ENCODE measurements at regions of chr6 and their contacts with region 1.

Region 1: GRCh38 chr6:56292505-56293181 is 45.3 kb upstream of the COL21A1 start:
- DNase-seq: peak; percentile 88
- H3K4me3 ChIP-seq: no peak overlapping the region
- H3K27ac ChIP-seq: no peak overlapping the region
- H3K4me1 ChIP-seq: peaks cover 5% of the 10 kb centered on the region
- H3K27me3 ChIP-seq: no peaks in the 10 kb centered on the region
- CTCF ChIP-seq: peak; percentile 30 to 38
- POLR2A ChIP-seq: no peak

Region 2: GRCh38 chr6:54404791-54405190 is 1887.9 kb before region 1 on chr6:
- CTCF ChIA-PET with region 1: no interaction called
- POLR2A ChIA-PET with region 1: no interaction called
- dilution Hi-C with region 1: no loop called
- intact Hi-C with region 1: no loop called
- DNase-seq: no peak
- H3K4me3 ChIP-seq: no peak overlapping the region
- H3K27ac ChIP-seq: no peak overlapping the region
- H3K4me1 ChIP-seq: no peaks in the 10 kb centered on the region
- H3K27me3 ChIP-seq: no peaks in the 10 kb centered on the region
- CTCF ChIP-seq: no peak
- POLR2A ChIP-seq: no peak

Region 3: DNA sequence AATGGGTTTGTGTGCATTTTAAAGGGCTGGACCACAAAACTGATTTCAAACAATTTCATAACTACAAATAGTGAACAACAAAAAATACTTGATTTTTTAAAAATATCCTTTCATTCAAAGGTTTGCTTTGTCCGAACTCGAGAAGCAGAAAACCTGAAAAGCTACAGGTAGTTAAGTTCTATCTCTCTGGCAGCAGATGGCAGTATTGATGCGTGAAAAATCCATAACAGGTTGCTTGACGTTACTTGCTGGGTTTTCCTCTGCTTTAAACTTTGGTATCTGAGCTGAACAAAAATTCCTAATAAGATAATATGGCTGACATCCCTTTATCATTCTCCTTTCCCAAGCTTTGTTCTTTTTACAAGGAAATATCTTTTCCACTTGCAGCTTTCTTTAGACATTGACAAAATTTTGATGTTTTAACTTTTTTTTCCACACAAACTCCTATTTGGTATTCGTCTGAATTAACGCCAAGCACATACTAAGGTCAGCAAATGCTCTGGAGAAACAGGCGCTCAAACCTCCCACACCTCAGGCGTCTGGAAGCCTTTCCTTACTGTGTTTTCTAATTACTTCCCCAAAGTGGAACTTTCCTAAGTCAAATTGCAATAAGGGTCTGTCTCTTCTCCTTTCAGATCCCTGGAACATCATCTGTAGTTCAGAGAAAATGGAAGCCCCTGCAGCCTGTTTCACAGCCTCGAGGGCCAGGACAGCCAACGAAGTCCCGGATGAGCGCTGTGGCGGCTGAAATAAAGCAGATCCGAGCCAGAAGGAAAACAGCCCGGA is 1015.7 kb before region 1 on chr6:
- CTCF ChIA-PET with region 1: interaction called, 61 read pairs
- POLR2A ChIA-PET with region 1: no interaction called
- dilution Hi-C with region 1: no loop called
- intact Hi-C with region 1: loop called (anchors 1 kb)
- DNase-seq: peak; percentile 64
- H3K4me3 ChIP-seq: no peak overlapping the region
- H3K27ac ChIP-seq: no peak overlapping the region
- H3K4me1 ChIP-seq: no peaks in the 10 kb centered on the region
- H3K27me3 ChIP-seq: peaks cover 0 to 2% of the 10 kb centered on the region in 2 experiments
- CTCF ChIP-seq: peak; percentile 47 to 56
- POLR2A ChIP-seq: no peak

Region 4: GRCh38 chr6:55617272-55617671 is 675.4 kb before region 1 on chr6:
- CTCF ChIA-PET with region 1: interaction called, 15 read pairs
- POLR2A ChIA-PET with region 1: no interaction called
- dilution Hi-C with region 1: no loop called
- intact Hi-C with region 1: loop called (anchors 1 kb)
- DNase-seq: peak; percentile 60
- H3K4me3 ChIP-seq: no peak overlapping the region
- H3K27ac ChIP-seq: no peak overlapping the region
- H3K4me1 ChIP-seq: no peaks in the 10 kb centered on the region
- H3K27me3 ChIP-seq: no peaks in the 10 kb centered on the region
- CTCF ChIP-seq: peak; percentile 54 to 59
- POLR2A ChIP-seq: no peak

Region 5: GRCh38 chr6:55963301-55963700 is 329.3 kb before region 1 on chr6:
- CTCF ChIA-PET with region 1: interaction called, 13 read pairs
- POLR2A ChIA-PET with region 1: no interaction called
- dilution Hi-C with region 1: no loop called
- intact Hi-C with region 1: no loop called
- DNase-seq: no peak
- H3K4me3 ChIP-seq: no peak overlapping the region
- H3K27ac ChIP-seq: no peak overlapping the region
- H3K4me1 ChIP-seq: no peaks in the 10 kb centered on the region
- H3K27me3 ChIP-seq: no peaks in the 10 kb centered on the region
- CTCF ChIP-seq: peak; percentile 29 to 37
- POLR2A ChIP-seq: no peak

Region 6: GRCh38 chr6:56046576-56046975 is 246.1 kb before region 1 on chr6:
- CTCF ChIA-PET with region 1: interaction called, 5 read pairs
- POLR2A ChIA-PET with region 1: no interaction called
- dilution Hi-C with region 1: no loop called
- intact Hi-C with region 1: loop called (anchors 2 kb)
- DNase-seq: peak; percentile 94
- H3K4me3 ChIP-seq: no peak overlapping the region
- H3K27ac ChIP-seq: peak overlapping the region; percentile 63
- H3K4me1 ChIP-seq: peaks cover 39% of the 10 kb centered on the region
- H3K27me3 ChIP-seq: no peaks in the 10 kb centered on the region
- CTCF ChIP-seq: no peak
- POLR2A ChIP-seq: no peak

Region 7: DNA sequence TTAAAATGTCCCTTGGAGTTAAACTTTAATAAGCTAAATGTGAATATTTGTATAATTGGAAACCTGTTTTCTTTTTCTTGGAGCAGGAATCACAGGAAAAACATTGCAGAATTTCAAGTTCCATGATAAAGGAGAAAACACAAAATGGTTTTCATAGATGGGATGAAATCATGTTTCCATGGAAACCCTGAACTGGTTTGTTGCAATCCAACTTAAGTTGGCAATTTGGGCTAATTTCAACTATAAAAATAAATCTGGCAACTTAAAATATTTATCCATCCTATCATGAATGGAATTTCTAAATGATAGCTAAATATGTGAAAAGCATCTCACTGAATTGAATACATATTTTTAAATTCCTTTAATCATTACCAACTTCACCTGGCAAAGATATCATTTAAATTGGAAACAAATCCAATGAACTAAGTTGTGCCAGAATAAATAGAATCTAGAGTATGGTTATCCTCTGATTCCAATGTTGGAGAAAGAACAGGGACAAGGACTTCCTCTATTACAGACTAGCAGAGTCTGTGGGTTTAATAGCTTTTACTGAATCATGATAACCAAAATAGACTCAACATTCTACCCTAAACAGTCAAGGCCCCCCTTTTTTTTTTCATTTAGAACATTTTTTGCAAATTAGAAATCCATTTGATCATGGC is 78.5 kb before region 1 on chr6:
- CTCF ChIA-PET with region 1: no interaction called
- POLR2A ChIA-PET with region 1: no interaction called
- dilution Hi-C with region 1: no loop called
- intact Hi-C with region 1: no loop called
- DNase-seq: no peak
- H3K4me3 ChIP-seq: no peak overlapping the region
- H3K27ac ChIP-seq: no peak overlapping the region
- H3K4me1 ChIP-seq: no peaks in the 10 kb centered on the region
- H3K27me3 ChIP-seq: no peaks in the 10 kb centered on the region
- CTCF ChIP-seq: no peak
- POLR2A ChIP-seq: no peak

Region 8: DNA sequence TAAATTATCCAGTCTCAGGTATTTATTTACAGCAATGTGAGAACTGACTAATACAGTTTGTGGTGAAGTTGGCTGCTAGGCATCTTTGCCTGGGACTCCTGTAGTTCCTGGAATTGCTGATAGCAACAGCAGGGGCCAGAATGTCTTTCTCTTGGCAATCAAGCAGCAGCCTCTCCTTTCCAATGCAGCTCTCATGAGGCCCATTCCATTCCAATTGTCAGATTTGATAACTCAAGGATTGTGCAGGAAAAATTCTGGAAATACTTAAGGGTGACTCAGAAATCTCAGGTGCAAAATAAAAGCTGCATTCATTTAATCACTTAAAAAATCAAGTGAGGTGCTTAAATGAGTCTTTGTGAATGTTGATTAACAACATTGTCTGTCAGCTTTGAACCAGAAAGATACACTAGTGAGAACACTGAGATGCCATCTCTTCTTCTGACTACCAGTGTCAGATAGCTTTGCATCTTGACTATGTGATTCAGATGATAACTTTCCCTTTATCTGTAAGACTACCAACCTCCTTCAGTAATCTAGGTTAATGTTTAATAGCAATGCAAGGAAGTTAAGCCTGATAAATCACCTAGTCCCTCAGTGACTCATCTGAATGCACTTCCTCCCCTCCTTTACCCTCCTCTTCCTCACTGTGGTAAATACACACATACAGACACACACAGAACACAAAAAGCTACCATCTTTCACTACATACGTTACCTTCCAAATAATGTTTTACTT is 13.1 kb before region 1 on chr6:
- CTCF ChIA-PET with region 1: interaction called, 16 read pairs
- POLR2A ChIA-PET with region 1: no interaction called
- dilution Hi-C with region 1: no loop called
- intact Hi-C with region 1: no loop called
- DNase-seq: peak; percentile 17
- H3K4me3 ChIP-seq: no peak overlapping the region
- H3K27ac ChIP-seq: no peak overlapping the region
- H3K4me1 ChIP-seq: no peaks in the 10 kb centered on the region
- H3K27me3 ChIP-seq: no peaks in the 10 kb centered on the region
- CTCF ChIP-seq: no peak
- POLR2A ChIP-seq: no peak

Region 9: DNA sequence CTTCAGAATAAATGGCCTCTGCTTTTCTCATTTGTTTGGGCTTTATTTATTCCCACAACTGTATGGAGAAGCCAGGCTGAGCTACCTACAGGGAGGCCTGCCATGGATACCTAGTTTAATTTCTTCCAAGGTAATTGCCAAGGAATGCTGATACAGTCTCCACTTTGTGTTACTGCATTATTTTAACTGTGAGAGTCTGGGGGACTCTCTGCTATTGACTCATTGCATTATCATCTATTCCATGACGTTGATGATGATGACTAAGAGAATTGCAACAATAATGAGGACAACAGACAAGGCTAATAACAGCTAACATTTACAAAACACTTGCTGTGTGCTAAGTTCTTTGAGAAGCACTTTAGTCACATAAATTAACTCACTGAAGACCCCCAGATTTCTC is 43.1 kb after region 1 on chr6:
- CTCF ChIA-PET with region 1: no interaction called
- POLR2A ChIA-PET with region 1: no interaction called
- dilution Hi-C with region 1: no loop called
- intact Hi-C with region 1: no loop called
- DNase-seq: peak; percentile 86
- H3K4me3 ChIP-seq: no peak overlapping the region
- H3K27ac ChIP-seq: peak overlapping the region; percentile 75
- H3K4me1 ChIP-seq: peaks cover 15% of the 10 kb centered on the region
- H3K27me3 ChIP-seq: no peaks in the 10 kb centered on the region
- CTCF ChIP-seq: no peak
- POLR2A ChIP-seq: no peak